GM18951 (cell line): ENCODE measurements at regions of chr7 and their contacts with region 1.

Region 1: GRCh38 chr7:100489824-100490223 is 6.1 kb downstream of the NYAP1 start:
- POLR2A ChIP-seq: no peak

Region 2: GRCh38 chr7:100553864-100554263 is 64.0 kb after region 1 on chr7:
- in situ Hi-C with region 1: loop called (anchors 5 kb)
- POLR2A ChIP-seq: no peak

Region 3: DNA sequence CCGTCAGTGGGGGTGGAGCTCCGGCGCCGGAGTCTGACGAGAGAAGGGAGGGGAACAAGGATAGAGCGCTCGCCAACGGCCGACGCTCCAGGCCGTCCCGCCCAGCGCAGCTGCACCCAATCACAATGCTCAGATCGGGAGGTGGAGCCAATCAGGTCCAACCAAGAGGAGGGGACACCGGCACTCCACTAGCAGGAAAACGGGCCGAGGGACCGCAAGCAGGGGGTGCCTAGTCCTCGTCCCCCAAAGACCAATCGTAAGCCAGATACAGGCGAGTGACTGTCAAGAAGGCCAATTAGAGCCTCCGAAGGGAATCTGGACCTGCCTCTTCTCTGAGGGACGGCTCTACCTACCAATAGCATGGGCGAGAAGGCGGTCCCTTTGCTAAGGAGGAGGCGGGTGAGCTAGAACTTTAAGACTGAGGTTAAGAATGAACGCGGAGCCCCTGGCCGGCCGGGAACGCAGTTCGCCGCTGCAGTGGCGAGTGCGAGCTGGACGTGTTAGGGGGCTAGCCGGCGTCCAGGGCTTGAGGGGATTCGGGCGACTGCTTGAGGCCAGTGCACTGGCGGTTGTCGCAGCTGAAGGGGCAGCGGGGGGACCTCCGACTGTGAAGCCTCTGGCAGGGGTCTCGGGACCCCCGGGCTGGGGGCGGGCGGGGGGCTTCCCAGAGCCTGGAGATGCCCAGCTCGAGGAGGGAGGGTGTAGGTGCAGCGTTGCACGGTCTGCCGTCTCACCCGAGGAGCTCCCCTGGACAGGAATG is 96.6 kb after region 1 on chr7 and contains the start of gene FBXO24:
- in situ Hi-C with region 1: no loop called
- POLR2A ChIP-seq: peak; percentile 75

Region 4: GRCh38 chr7:100753750-100754149 is 263.9 kb after region 1 on chr7:
- in situ Hi-C with region 1: no loop called
- POLR2A ChIP-seq: no peak